GM12878 (cell line): ENCODE measurements at regions of chr10 and their contacts with region 1.

Region 1: DNA sequence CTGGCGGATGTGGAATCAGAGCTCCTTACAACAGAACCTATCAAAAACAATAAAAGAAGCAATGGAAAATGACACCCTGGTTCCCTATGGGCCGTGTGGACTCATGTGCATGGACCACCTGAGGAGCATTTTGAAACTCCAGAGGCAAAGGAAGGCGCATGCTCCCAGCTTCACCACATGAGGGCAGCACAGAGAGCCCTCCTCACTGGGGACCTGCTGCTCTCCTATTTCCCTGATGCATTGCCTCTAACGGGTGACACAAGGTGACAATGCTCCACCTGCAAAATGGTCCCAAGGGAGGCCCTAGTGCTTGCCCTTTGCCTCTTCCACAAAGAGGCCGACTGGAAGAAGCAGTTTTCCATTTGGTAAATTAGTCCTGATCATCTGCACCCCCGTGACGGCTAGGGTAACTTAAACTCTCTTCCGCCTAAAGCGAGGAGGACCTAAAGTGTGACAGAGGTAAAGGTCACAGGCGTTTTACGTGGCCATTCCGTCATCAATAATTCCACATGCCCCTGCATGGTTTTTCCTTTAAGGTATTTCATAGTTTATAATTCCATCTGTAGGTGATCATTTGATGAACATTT is 67.7 kb downstream of the GPAM start:
- DNase-seq: no peak
- ATAC-seq: peak; percentile 94
- H3K4me3 ChIP-seq: no peak overlapping the region
- H3K27ac ChIP-seq: no peak overlapping the region
- H3K4me1 ChIP-seq: no peaks in the 10 kb centered on the region
- H3K27me3 ChIP-seq: no peaks in the 10 kb centered on the region
- CTCF ChIP-seq: peak; percentile 70 to 87 (median 79)
- EP300 ChIP-seq: no peak
- POLR2A ChIP-seq: no peak
- RAD21 ChIP-seq: peak; percentile 49

Region 2: DNA sequence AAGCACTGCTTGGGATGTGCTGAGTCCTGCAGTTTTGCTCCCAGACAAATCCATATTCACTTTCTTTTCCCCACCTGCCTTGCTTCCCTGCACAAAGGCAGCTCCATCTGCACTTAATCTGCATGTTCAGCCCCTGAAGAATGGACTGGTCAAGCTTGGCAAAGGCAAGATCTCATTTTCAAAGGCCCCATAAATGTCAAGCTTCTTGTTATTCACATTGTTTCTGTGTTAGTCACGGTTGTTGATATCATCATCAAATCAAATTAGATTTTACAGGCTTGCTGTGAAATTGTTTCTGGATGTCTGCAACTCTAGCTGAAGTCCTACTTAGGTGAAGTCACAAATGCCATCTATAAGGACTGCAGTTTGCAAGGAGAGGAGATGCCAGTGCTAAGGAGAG is 23.4 kb before region 1 on chr10:
- CTCF ChIA-PET with region 1: interaction called, 12 read pairs
- POLR2A ChIA-PET with region 1: no interaction called
- RAD21 ChIA-PET with region 1: no interaction called
- SMC1A ChIA-PET with region 1: interaction called, 5 read pairs
- in situ Hi-C with region 1: no loop called
- intact Hi-C with region 1: no loop called
- DNase-seq: no peak
- ATAC-seq: no peak
- H3K4me3 ChIP-seq: no peak overlapping the region
- H3K27ac ChIP-seq: no peak overlapping the region
- H3K4me1 ChIP-seq: no peaks in the 10 kb centered on the region
- H3K27me3 ChIP-seq: no peaks in the 10 kb centered on the region
- CTCF ChIP-seq: no peak
- EP300 ChIP-seq: no peak
- POLR2A ChIP-seq: no peak
- RAD21 ChIP-seq: no peak

Region 3: DNA sequence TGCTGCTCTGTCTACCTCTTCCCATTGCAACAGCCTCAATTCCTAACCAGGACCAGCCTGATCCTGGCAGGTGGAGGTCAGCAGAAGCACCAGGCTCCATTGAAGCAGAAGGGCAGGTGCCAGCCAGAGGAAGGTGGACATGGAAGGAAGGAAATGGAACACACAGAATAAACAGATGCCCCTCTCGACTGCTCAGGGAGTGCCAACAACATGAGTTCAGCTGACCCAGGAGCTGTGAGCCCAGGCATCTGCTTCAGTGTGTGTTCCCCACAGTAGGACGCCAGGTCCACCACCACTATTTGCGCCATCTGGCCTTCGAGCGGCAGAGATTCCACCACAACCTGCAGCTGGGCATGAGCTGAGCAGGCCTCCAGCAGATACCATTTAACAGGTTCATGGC is 11.0 kb after region 1 on chr10:
- CTCF ChIA-PET with region 1: interaction called, 12 read pairs
- POLR2A ChIA-PET with region 1: no interaction called
- RAD21 ChIA-PET with region 1: no interaction called
- SMC1A ChIA-PET with region 1: interaction called, 5 read pairs
- in situ Hi-C with region 1: no loop called
- intact Hi-C with region 1: no loop called
- DNase-seq: no peak
- ATAC-seq: no peak
- H3K4me3 ChIP-seq: no peak overlapping the region
- H3K27ac ChIP-seq: no peak overlapping the region
- H3K4me1 ChIP-seq: no peaks in the 10 kb centered on the region
- H3K27me3 ChIP-seq: peaks cover 0 to 2% of the 10 kb centered on the region in 2 experiments; a peak in 2 of 4 replicates
- CTCF ChIP-seq: no peak
- EP300 ChIP-seq: no peak
- POLR2A ChIP-seq: no peak
- RAD21 ChIP-seq: no peak

Region 4: DNA sequence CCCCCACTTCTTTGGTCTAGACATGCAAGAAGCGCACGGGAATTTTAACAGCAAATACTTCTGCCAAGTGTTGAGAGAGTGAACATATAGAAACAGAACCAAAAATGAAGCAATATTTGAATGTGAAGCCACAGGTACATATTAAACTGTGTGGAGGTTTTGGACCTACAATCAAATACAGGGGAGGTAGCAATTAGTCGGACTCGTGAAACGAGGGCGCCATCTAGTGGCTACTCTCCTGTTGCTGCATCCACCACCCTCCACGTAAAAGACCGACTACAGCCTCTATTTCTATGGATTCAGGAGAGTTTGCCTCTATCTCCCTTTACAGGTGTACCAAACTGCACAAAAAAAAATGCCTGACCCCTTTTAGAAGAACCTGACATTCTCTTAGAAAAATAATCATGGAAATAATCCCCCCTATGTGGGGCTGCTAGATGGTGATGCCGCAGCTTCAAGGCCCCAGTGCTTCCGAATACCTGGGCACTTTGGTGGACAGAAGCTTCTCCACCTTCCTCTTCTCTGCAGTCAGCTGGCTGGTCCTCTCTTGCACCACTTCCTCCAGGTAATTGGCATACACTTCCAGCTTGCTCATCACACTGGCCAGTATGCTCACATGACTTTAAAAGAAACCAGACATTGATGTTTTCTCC is 199.1 kb after region 1 on chr10:
- CTCF ChIA-PET with region 1: interaction called, 12 read pairs
- POLR2A ChIA-PET with region 1: no interaction called
- RAD21 ChIA-PET with region 1: interaction called, 3 read pairs
- SMC1A ChIA-PET with region 1: interaction called, 6 read pairs
- in situ Hi-C with region 1: no loop called
- intact Hi-C with region 1: loop called (anchors 1 kb)
- DNase-seq: no peak
- ATAC-seq: peak; percentile 98
- H3K4me3 ChIP-seq: no peak overlapping the region
- H3K27ac ChIP-seq: no peak overlapping the region
- H3K4me1 ChIP-seq: no peaks in the 10 kb centered on the region
- H3K27me3 ChIP-seq: no peaks in the 10 kb centered on the region; a peak in 2 of 4 replicates
- CTCF ChIP-seq: peak; percentile 81 to 88 (median 82)
- EP300 ChIP-seq: no peak
- POLR2A ChIP-seq: no peak
- RAD21 ChIP-seq: peak; percentile 80